A673 (cell line): ENCODE measurements at regions of chr3 and their contacts with region 1.

Region 1: DNA sequence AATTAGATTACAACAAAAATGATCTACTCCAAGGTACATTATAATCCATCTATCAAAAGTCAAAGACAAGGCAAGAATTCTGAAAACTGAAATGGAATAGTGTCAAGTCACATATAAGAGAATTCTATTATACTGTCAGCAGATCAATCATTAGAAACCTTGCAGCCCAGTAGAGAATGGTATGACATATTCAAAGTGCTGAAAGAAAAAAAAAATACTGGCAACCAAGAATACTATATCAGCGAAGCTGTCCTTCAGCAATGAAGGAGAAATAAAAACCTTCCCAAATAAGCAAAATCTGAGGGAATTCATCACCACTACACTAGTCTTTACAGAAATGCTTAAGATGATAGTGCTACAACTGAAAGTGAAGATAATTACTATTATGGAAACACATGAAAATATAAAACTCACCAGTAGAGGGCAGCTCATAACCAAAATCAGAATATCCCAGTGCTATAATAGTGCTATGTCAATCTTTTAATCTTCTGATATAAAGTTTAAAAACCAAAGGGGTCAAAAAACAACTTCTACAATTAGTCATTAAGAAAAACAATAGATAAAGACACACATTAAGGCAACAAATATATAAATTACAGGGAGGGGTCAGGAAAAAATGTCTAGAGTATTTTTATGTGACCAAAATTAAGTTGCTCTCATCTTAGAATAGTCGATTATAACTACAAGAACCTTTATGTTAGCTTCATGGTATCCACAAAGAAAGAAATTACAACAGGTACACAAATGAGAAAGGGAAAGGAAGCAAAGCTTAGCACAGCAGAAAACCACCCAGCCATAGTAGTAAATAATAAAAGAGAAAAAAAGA is 190.7 kb upstream of the CNTN6 start:
- DNase-seq: peak; percentile 40
- H3K4me3 ChIP-seq: no peak overlapping the region
- H3K27ac ChIP-seq: no peak overlapping the region
- H3K4me1 ChIP-seq: no peaks in the 10 kb centered on the region
- H3K27me3 ChIP-seq: no peaks in the 10 kb centered on the region
- CTCF ChIP-seq: peak; percentile 65

Region 2: GRCh38 chr3:861721-862120 is 40.4 kb before region 1 on chr3:
- CTCF ChIA-PET with region 1: no interaction called
- POLR2A ChIA-PET with region 1: no interaction called
- intact Hi-C with region 1: no loop called
- DNase-seq: no peak
- H3K4me3 ChIP-seq: no peak overlapping the region
- H3K27ac ChIP-seq: no peak overlapping the region
- H3K4me1 ChIP-seq: no peaks in the 10 kb centered on the region
- H3K27me3 ChIP-seq: no peaks in the 10 kb centered on the region
- CTCF ChIP-seq: no peak

Region 3: GRCh38 chr3:1082108-1082507 is 179.9 kb after region 1 on chr3:
- CTCF ChIA-PET with region 1: no interaction called
- POLR2A ChIA-PET with region 1: no interaction called
- intact Hi-C with region 1: loop called (anchors 10 kb)
- DNase-seq: peak; percentile 40
- H3K4me3 ChIP-seq: no peak overlapping the region
- H3K27ac ChIP-seq: no peak overlapping the region
- H3K4me1 ChIP-seq: peaks cover 8% of the 10 kb centered on the region
- H3K27me3 ChIP-seq: no peaks in the 10 kb centered on the region
- CTCF ChIP-seq: peak; percentile 69

Region 4: DNA sequence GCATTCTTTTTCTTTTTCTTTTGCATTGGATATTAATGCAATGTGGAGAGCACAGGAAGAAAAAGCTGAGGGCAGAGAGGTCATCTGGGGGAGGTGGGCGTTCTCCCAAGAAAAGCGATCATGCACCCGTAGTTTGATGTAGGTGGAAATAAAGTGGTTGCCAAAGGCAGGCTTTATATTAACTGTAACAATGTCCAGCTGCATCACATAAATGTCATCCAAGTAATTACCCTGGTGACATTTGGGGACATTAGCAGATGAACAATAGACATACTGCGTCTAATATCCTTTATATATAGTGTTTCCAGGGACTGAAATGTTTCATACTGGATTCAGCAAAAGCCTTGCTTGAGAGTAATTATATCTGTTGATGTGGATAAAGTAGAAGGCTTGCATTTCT is 326.1 kb after region 1 on chr3:
- CTCF ChIA-PET with region 1: no interaction called
- POLR2A ChIA-PET with region 1: no interaction called
- intact Hi-C with region 1: no loop called
- DNase-seq: no peak
- H3K4me3 ChIP-seq: no peak overlapping the region
- H3K27ac ChIP-seq: no peak overlapping the region
- H3K4me1 ChIP-seq: no peaks in the 10 kb centered on the region
- H3K27me3 ChIP-seq: no peaks in the 10 kb centered on the region
- CTCF ChIP-seq: no peak

Region 5: GRCh38 chr3:2156244-2156847 is 1254.2 kb after region 1 on chr3:
- CTCF ChIA-PET with region 1: no interaction called
- POLR2A ChIA-PET with region 1: no interaction called
- intact Hi-C with region 1: loop called (anchors 10 kb)
- DNase-seq: peak; percentile 77
- H3K4me3 ChIP-seq: peak overlapping the region; percentile 34
- H3K27ac ChIP-seq: no peak overlapping the region
- H3K4me1 ChIP-seq: peaks cover 5% of the 10 kb centered on the region
- H3K27me3 ChIP-seq: no peaks in the 10 kb centered on the region
- CTCF ChIP-seq: peak; percentile 93